HEK293 (cell line): ENCODE measurements at regions of chr7 and their contacts with region 1.

Region 1: DNA sequence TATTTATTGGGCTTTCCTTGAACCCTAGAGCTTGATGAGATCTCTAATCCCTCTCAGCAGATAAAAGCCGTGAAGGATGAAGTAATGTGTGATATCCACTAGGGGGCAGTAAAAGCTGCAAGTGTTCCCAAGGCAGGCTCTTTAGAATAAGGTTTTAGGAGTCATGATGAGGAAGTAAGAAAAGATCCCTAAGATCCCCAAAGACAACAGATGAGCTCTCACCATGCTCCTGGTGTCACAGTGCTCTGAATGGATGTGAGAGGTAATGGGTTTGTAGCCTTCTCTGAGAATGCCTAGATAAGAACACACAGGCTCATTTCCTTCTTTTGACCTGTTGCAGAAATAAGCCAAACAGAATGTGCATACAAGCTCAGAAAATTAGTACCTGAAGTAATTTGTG is 70.4 kb upstream of the ITPRID1 start:
- H3K4me3 ChIP-seq: no peak overlapping the region
- H3K27ac ChIP-seq: no peak overlapping the region
- H3K4me1 ChIP-seq: no peaks in the 10 kb centered on the region
- CTCF ChIP-seq: no peak

Region 2: DNA sequence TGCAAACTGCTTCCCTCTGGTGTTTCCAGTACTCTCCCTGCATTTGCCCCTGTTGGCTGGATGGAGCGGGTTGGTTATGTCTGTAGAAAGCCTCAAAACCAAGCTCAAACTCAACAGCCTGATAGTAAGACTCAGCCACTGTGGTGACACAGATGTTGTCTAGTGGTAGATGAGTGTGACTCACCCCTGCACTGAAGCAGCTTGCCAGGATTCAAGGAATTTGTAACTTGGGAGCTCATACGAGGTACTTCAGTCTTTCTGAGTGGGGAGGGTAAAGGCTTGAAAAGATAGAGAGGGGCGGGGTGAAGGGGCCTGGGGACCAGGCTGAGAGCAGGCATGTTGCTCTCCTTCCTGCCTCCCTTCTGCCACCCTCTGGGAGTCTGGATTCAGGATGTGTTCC is 554.7 kb before region 1 on chr7:
- CTCF ChIA-PET with region 1: no interaction called
- POLR2A ChIA-PET with region 1: no interaction called
- H3K4me3 ChIP-seq: no peak overlapping the region
- H3K27ac ChIP-seq: no peak overlapping the region
- H3K4me1 ChIP-seq: peaks cover 4% of the 10 kb centered on the region
- CTCF ChIP-seq: no peak

Region 3: GRCh38 chr7:31373337-31374289 is 69.8 kb before region 1 on chr7:
- CTCF ChIA-PET with region 1: interaction called, 20 read pairs
- POLR2A ChIA-PET with region 1: no interaction called
- H3K4me3 ChIP-seq: no peak overlapping the region
- H3K27ac ChIP-seq: no peak overlapping the region
- H3K4me1 ChIP-seq: no peaks in the 10 kb centered on the region
- CTCF ChIP-seq: no peak

Region 4: GRCh38 chr7:31456646-31457368 is 13.3 kb after region 1 on chr7:
- CTCF ChIA-PET with region 1: interaction called, 15 read pairs
- POLR2A ChIA-PET with region 1: no interaction called
- H3K4me3 ChIP-seq: no peak overlapping the region
- H3K27ac ChIP-seq: no peak overlapping the region
- H3K4me1 ChIP-seq: no peaks in the 10 kb centered on the region
- CTCF ChIP-seq: no peak

Region 5: DNA sequence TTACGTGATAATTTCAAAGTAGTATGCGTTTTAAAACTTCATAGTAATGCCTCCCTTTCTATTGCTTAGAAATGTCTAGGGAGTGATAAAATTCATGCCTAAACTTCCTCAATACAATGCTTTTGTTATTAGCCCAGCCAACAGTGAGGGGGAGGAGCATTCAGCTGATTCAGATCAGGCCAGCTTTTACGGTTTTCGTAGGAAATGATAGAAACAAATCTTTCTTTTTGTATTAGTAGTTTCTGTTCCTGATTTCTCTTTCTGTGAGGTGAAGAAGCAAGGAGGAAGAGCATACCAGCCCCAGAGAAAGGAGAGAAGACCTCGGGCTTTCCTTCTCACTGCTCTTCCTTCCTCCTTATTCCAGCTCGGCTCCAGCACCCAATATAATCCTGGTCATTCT is 35.3 kb after region 1 on chr7:
- CTCF ChIA-PET with region 1: interaction called, 12 read pairs
- POLR2A ChIA-PET with region 1: no interaction called
- H3K4me3 ChIP-seq: no peak overlapping the region
- H3K27ac ChIP-seq: no peak overlapping the region
- H3K4me1 ChIP-seq: 0 out of 2 replicates have a peak, but pooled peaks cover 3% of the 10 kb centered on the region
- CTCF ChIP-seq: no peak

Region 6: GRCh38 chr7:31633894-31634494 is 190.5 kb after region 1 on chr7:
- CTCF ChIA-PET with region 1: interaction called, 36 read pairs
- POLR2A ChIA-PET with region 1: no interaction called
- H3K4me3 ChIP-seq: no peak overlapping the region
- H3K27ac ChIP-seq: no peak overlapping the region
- H3K4me1 ChIP-seq: no peaks in the 10 kb centered on the region
- CTCF ChIP-seq: no peak